HepG2 (cell line): ENCODE measurements at regions of chr18 and their contacts with region 1.

Region 1: GRCh38 chr18:21242141-21242779 is at the start of gene GREB1L:
- DNase-seq: peak; percentile 16
- ATAC-seq: peak; percentile 98
- H3K4me3 ChIP-seq: peak within 1 kb of the TSS; percentile 40 to 76 (median 61); a peak in 5 of 6 replicates
- H3K27ac ChIP-seq: no peak within 1 kb of the TSS
- H3K4me1 ChIP-seq: peaks cover 10% of the 10 kb centered on the region
- H3K27me3 ChIP-seq: peaks cover 4 to 42% of the 10 kb centered on the region in 2 experiments
- CTCF ChIP-seq: peak; percentile 56
- EP300 ChIP-seq: no peak
- POLR2A ChIP-seq: no peak
- RAD21 ChIP-seq: peak; percentile 89
- total RNA-seq, gene GREB1L: 0.63 and 0.66 TPM in 2 replicates

Region 2: GRCh38 chr18:21289827-21290226 is 47.6 kb after region 1 on chr18:
- CTCF ChIA-PET with region 1: no interaction called
- POLR2A ChIA-PET with region 1: no interaction called
- in situ Hi-C with region 1: no loop called
- intact Hi-C with region 1: loop called (anchors 5 kb)
- DNase-seq: no peak
- ATAC-seq: no peak
- H3K4me3 ChIP-seq: no peak overlapping the region
- H3K27ac ChIP-seq: no peak overlapping the region
- H3K4me1 ChIP-seq: no peaks in the 10 kb centered on the region
- H3K27me3 ChIP-seq: no peaks in the 10 kb centered on the region; a peak in 1 of 5 replicates
- CTCF ChIP-seq: no peak
- EP300 ChIP-seq: no peak
- POLR2A ChIP-seq: no peak
- RAD21 ChIP-seq: no peak

Region 3: DNA sequence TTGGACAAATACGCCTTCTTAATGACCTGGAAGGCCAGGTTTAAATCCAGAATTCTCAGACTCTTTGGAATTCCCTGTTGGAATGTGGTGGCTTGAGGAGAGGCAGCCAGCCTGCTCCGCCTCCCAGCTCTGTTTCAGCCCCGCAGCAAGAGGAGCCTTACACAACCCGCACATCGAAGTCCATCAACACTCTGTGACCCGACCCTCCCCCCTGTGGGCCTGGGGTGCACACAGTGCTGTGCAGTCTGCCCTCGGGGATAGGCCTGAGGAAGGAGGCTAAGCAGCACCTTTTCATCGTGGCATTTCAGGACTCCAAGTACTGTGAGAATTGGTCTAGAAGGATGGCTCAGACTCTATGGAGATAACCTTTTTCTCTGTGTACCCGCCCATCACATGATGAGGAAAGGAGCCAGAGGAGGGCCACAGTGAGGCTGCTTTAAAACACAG is 73.5 kb after region 1 on chr18:
- CTCF ChIA-PET with region 1: no interaction called
- POLR2A ChIA-PET with region 1: no interaction called
- in situ Hi-C with region 1: no loop called
- intact Hi-C with region 1: no loop called
- DNase-seq: peak; percentile 9
- ATAC-seq: peak; percentile 93
- H3K4me3 ChIP-seq: no peak overlapping the region; a peak in 1 of 6 replicates
- H3K27ac ChIP-seq: no peak overlapping the region
- H3K4me1 ChIP-seq: no peaks in the 10 kb centered on the region
- H3K27me3 ChIP-seq: no peaks in the 10 kb centered on the region
- CTCF ChIP-seq: 0 out of 2 replicates have a peak, but pooled peaks have one; percentile 6
- EP300 ChIP-seq: no peak
- POLR2A ChIP-seq: no peak
- RAD21 ChIP-seq: no peak